ENCODE measurements at regions of chr6 and their contacts with region 1.

Region 1: GRCh38 chr6:70884074-70884983 is 72.5 kb downstream of the B3GAT2 start:
- DNase-seq: peak; percentile 80
- H3K4me3 Mint-ChIP-seq: no peak overlapping the region
- H3K27ac Mint-ChIP-seq: no peak overlapping the region
- H3K4me1 Mint-ChIP-seq: no peaks in the 10 kb centered on the region
- H3K27me3 Mint-ChIP-seq: peaks cover 46% of the 10 kb centered on the region
- CTCF ChIP-seq: peak; percentile 97

Region 2: GRCh38 chr6:70547313-70547712 is 337.0 kb before region 1 on chr6:
- CTCF ChIA-PET with region 1: no interaction called
- intact Hi-C with region 1: loop called (anchors 5 kb)
- DNase-seq: no peak
- H3K4me3 Mint-ChIP-seq: no peak overlapping the region
- H3K27ac Mint-ChIP-seq: no peak overlapping the region
- H3K4me1 Mint-ChIP-seq: no peaks in the 10 kb centered on the region
- H3K27me3 Mint-ChIP-seq: no peaks in the 10 kb centered on the region
- CTCF ChIP-seq: no peak

Region 3: GRCh38 chr6:70797625-70798024 is 86.7 kb before region 1 on chr6:
- CTCF ChIA-PET with region 1: no interaction called
- intact Hi-C with region 1: no loop called
- DNase-seq: no peak
- H3K4me3 Mint-ChIP-seq: no peak overlapping the region
- H3K27ac Mint-ChIP-seq: no peak overlapping the region
- H3K4me1 Mint-ChIP-seq: no peaks in the 10 kb centered on the region
- H3K27me3 Mint-ChIP-seq: no peaks in the 10 kb centered on the region
- CTCF ChIP-seq: no peak